BJ (cell line): ENCODE measurements at regions of chr2 and their contacts with region 1.

Region 1: GRCh38 chr2:27754138-27754588 is 17.4 kb upstream of the MRPL33 start:
- DNase-seq: no peak
- H3K4me3 ChIP-seq: no peak overlapping the region
- H3K27me3 ChIP-seq: no peaks in the 10 kb centered on the region
- CTCF ChIP-seq: peak; percentile 98

Region 2: GRCh38 chr2:27622921-27623384 is 131.2 kb before region 1 on chr2:
- CTCF ChIA-PET with region 1: no interaction called
- POLR2A ChIA-PET with region 1: no interaction called
- DNase-seq: peak; percentile 24
- H3K4me3 ChIP-seq: no peak overlapping the region
- H3K27me3 ChIP-seq: no peaks in the 10 kb centered on the region
- CTCF ChIP-seq: no peak

Region 3: DNA sequence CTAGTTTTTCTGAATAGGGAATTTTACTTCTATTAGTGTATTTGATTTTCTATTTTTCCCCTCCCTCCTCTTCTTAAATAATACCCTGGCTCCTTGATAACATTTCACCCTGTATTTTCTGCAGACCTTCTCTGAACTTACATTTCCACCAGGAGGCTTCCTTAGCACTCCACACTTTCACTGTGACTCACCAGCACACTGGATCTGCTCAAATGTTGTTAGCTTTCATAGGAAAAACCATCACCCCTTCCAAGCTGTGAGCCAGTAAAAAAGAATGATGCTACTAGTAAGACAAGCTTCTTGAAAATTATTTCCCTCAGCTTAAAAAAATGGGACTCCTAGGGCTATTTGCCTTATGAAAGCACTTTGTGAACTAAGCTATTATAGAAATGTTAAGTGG is 106.9 kb before region 1 on chr2:
- CTCF ChIA-PET with region 1: no interaction called
- POLR2A ChIA-PET with region 1: no interaction called
- DNase-seq: no peak
- H3K4me3 ChIP-seq: no peak overlapping the region
- H3K27me3 ChIP-seq: no peaks in the 10 kb centered on the region
- CTCF ChIP-seq: no peak

Region 4: GRCh38 chr2:27723372-27724144 is 30.6 kb before region 1 on chr2:
- CTCF ChIA-PET with region 1: interaction called, 15 read pairs
- POLR2A ChIA-PET with region 1: no interaction called
- DNase-seq: no peak
- H3K4me3 ChIP-seq: no peak overlapping the region
- H3K27me3 ChIP-seq: no peaks in the 10 kb centered on the region
- CTCF ChIP-seq: peak; percentile 89

Region 5: GRCh38 chr2:27771548-27772335 is 17.6 kb after region 1 on chr2 and contains the start of gene MRPL33:
- CTCF ChIA-PET with region 1: interaction called, 12 read pairs
- POLR2A ChIA-PET with region 1: no interaction called
- DNase-seq: no peak
- H3K4me3 ChIP-seq: peak within 1 kb of the TSS; percentile 79
- H3K27me3 ChIP-seq: no peaks in the 10 kb centered on the region
- CTCF ChIP-seq: no peak
- polyA plus RNA-seq, gene MRPL33: 31.0 and 83.3 TPM in 2 replicates

Region 6: DNA sequence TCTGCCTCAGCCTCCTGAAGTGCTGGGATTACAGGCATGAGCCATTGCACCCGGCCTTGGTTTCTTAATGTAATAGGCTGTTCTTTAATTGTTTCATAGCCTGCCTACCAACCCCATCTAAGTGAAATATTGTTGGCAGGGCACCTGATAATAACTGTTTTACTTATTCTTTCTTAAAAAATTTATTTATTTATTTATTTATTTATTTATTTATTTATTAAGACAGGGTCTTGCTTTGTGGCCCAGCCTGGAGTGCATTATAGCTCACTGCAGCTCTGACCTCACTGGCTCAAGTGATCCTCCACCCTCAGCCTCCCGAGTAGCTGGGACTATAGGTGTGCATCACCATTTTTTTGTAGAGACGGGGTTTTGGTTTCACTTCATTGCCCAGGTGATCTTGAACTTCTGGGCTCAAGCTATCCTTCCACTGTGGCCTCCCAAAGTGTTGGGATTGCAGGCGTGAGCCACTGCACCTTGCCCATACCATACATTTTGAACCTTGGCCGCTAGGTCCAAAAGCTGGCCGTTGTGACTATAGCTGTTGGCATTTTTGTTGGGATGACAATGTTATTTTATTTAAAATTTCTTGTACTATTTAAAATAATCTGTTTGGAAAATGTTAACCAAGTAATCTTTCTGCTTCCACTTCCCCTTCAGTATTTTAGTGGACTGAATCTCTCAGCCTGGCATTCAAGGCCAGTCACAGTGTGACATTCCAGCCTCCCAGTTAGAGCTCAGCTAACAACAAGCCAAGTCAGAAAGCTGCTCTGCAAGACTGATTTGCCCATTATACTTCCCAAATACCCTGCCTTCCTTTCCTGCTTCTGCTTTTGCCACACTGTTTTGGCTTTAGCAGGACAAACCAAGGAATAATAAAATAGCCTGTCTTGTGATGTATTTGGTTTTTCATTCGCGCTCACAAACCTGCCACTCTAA is 188.7 kb after region 1 on chr2:
- CTCF ChIA-PET with region 1: no interaction called
- POLR2A ChIA-PET with region 1: no interaction called
- DNase-seq: no peak
- H3K4me3 ChIP-seq: no peak overlapping the region
- H3K27me3 ChIP-seq: no peaks in the 10 kb centered on the region
- CTCF ChIP-seq: no peak

Region 7: DNA sequence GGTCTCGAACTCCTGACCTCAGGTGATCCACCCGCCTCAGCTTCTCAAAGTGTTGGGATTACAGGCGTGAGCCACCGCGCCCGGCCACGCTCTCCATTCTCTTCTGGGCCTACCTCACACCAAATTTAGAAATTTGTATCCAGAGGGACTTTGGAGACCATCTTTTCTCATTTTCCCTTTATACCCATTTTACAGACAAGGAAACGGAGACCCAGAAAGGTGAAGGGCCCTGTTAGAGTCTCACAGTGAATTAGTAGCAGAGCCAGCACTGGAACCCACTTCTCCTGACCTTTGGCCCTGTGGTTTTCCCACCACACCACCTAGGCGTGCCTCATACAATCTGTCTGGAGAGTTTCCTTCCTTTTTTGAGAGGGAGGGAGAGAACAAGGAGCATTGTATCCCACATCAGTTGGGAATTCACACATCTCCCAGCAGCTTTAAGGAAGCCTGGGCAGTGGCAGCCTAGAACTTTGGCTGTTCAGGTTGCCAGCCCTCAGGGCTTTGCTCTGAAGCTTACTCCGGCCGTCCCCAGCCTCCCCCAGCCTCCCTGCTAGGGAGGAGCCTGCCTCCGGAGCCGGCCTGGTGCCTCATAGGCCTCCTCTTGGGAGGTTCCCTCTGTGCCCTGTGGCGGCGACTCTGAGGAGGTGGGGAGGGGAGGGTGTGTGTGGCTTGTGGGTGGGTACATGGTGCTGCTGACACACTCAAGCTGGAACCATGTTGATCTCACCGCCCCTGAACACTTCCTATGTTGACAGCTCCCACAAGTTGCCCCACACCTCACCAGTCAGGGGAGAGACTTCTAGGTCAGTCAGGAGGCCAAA is 652.3 kb after region 1 on chr2:
- CTCF ChIA-PET with region 1: interaction called, 14 read pairs
- POLR2A ChIA-PET with region 1: no interaction called
- DNase-seq: no peak
- H3K4me3 ChIP-seq: no peak overlapping the region
- H3K27me3 ChIP-seq: no peaks in the 10 kb centered on the region
- CTCF ChIP-seq: no peak

Region 8: DNA sequence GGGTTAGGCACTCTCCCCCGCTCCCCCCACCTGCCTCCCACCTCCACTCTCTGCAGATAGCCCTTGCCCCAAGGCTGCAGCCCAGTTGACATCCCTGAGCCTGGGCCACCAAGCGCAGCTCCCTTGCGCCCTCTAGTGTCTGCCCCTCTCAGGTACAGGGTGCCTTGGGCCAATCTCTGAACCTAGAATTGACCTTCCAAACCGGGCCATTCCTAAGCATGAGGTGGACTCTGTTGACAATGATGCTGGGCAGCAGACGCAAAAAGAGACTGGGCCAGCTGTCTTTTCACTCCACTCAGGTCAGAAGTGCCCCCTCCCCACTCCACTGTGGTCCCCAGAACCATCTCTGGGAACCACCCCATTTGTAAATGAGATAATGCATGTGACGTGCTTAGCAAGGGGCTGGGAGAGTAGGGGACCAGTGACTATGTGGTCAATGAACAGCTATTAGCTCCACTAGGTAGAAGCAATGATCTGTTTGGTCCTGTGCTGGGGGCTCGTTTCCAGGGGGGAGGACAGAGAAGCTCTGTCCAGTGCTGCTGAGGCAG is 698.4 kb after region 1 on chr2:
- CTCF ChIA-PET with region 1: interaction called, 19 read pairs
- POLR2A ChIA-PET with region 1: no interaction called
- DNase-seq: no peak
- H3K4me3 ChIP-seq: no peak overlapping the region
- H3K27me3 ChIP-seq: no peaks in the 10 kb centered on the region
- CTCF ChIP-seq: peak; percentile 97